CD4-positive, alpha-beta T cell (primary cell): ENCODE measurements at regions of chr1 and their contacts with region 1.

Region 1: DNA sequence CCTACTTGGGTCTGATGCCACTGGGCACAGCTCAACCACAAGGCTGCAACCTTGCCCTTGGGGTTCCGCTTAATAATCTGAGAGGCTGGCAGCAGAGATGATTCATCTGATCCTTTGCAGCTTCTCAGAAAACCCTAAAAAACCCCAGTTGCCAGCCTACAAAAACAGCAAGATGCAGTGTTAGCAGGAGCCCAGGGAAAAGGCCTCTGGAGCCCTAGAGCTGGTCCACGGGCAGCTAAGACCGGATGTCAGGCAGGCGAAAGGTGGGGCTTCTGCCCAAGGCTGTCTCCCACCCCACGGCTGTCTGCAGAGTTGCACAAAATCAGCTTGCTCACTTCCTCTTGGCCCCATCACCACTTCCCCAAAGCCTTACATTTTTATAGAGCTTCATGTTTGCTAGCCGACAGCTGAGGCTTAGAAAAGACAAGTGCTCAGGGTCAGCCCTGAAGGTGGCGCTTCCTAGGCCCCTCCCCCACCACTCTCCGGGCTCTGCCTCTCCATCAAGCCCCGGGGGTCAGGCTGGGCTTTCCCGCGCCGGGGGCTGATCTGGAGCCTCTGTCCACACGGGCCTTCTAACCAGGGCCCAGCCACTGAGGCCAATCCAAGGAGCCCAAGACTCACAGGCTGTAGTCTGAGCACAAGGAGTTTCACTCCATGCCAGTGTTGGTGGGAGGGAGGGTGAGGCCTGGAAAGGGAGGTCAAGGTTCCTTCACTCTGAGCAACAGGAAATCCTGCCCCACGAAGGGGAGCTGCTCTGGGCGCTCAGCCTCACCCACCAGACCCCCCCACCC is 4.2 kb upstream of the ADORA3 start:
- DNase-seq: peak in 13 of 14 experiments; percentile 43 to 83 (median 54)
- ATAC-seq: peak; percentile 49
- H3K4me3 ChIP-seq: peak overlapping the region; percentile 46
- H3K4me3 Mint-ChIP-seq: peak overlapping the region; percentile 84
- H3K27ac ChIP-seq: peak overlapping the region; percentile 83 to 90
- H3K27ac Mint-ChIP-seq: no peak overlapping the region
- H3K4me1 ChIP-seq: peaks cover 97% of the 10 kb centered on the region
- H3K4me1 Mint-ChIP-seq: peaks cover 55% of the 10 kb centered on the region
- H3K27me3 ChIP-seq: no peaks in the 10 kb centered on the region
- H3K27me3 Mint-ChIP-seq: no peaks in the 10 kb centered on the region
- CTCF ChIP-seq: no peak

Region 2: GRCh38 chr1:109570417-109570827 is 1937.2 kb before region 1 on chr1:
- CTCF ChIA-PET with region 1: no interaction called
- POLR2A ChIA-PET with region 1: no interaction called
- intact Hi-C with region 1: no loop called
- DNase-seq: no peak
- ATAC-seq: no peak
- H3K4me3 ChIP-seq: no peak overlapping the region
- H3K4me3 Mint-ChIP-seq: no peak overlapping the region
- H3K27ac ChIP-seq: no peak overlapping the region
- H3K27ac Mint-ChIP-seq: no peak overlapping the region
- H3K4me1 ChIP-seq: peaks cover 12% of the 10 kb centered on the region
- H3K4me1 Mint-ChIP-seq: peaks cover 26% of the 10 kb centered on the region
- H3K27me3 ChIP-seq: no peaks in the 10 kb centered on the region
- H3K27me3 Mint-ChIP-seq: no peaks in the 10 kb centered on the region
- CTCF ChIP-seq: no peak

Region 3: GRCh38 chr1:111448918-111449702 is 58.5 kb before region 1 on chr1 and contains the starts of genes ATP5PB and WDR77:
- CTCF ChIA-PET with region 1: interaction called, 4 read pairs
- POLR2A ChIA-PET with region 1: interaction called, 13 read pairs
- intact Hi-C with region 1: no loop called
- DNase-seq: peak; percentile 73 to 99 (median 84)
- ATAC-seq: peak; percentile 95
- H3K4me3 ChIP-seq: peak within 1 kb of the TSS; percentile 75
- H3K4me3 Mint-ChIP-seq: peak within 1 kb of the TSS; percentile 97
- H3K27ac ChIP-seq: peak within 1 kb of the TSS; percentile 75 to 93
- H3K27ac Mint-ChIP-seq: peak within 1 kb of the TSS; percentile 97
- H3K4me1 ChIP-seq: peaks cover 44% of the 10 kb centered on the region
- H3K4me1 Mint-ChIP-seq: peaks cover 92% of the 10 kb centered on the region
- H3K27me3 ChIP-seq: no peaks in the 10 kb centered on the region
- H3K27me3 Mint-ChIP-seq: no peaks in the 10 kb centered on the region
- CTCF ChIP-seq: no peak
- total RNA-seq, gene ATP5PB: 47.3 to 51.5 TPM
- total RNA-seq, gene WDR77: 12.4 to 15.1 TPM

Region 4: DNA sequence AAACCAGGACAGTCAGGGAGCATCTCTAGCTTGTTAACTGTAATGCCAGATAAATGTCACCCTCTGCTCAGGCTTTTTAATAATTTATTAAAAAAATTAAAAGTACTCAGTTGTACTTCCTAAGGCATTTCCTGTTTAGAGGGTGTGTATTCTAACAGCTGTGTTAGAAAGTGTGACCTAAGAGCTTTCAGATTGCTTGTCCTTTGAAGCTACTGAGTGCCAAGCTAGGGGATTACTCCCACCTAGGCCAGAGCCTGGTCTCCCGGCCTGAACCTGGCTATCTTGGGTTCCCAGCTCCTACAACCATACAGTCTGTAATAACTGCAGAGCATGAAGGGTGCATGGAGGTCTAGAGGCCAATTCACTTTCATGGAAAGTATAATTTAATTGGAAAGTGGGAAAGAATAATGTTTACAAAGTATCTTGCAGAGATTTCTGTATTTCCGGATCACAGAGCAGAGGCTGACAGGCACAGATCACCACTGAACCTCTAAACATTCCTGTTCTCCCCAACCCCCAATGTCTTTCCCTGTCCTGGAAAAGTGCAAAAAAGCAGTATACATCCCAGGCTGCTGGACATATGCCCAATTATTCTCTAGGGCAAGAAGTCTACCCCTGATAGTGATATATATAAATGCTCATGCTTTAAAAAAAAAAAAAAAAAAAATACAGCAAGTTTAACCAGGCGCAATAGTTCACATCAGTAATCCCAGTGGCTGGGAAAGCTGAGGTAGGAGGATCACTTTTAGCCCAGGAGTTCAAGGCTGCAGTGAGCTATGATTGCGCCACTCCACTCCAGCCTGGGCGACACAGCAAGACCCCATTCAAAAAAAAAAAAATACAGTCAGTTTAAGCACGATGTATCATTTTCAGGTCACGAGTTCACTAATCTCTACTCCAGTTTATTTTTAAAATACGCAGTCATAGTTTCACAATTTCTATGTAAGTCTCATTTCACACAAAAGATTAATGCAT is 75.3 kb after region 1 on chr1:
- CTCF ChIA-PET with region 1: interaction called, 10 read pairs
- POLR2A ChIA-PET with region 1: interaction called, 4 read pairs
- intact Hi-C with region 1: no loop called
- DNase-seq: peak in 1 of 14 experiments; percentile 52
- ATAC-seq: no peak
- H3K4me3 ChIP-seq: no peak overlapping the region
- H3K4me3 Mint-ChIP-seq: no peak overlapping the region
- H3K27ac ChIP-seq: no peak overlapping the region
- H3K27ac Mint-ChIP-seq: no peak overlapping the region
- H3K4me1 ChIP-seq: peaks cover 4% of the 10 kb centered on the region
- H3K4me1 Mint-ChIP-seq: peaks cover 5% of the 10 kb centered on the region
- H3K27me3 ChIP-seq: no peaks in the 10 kb centered on the region
- H3K27me3 Mint-ChIP-seq: no peaks in the 10 kb centered on the region
- CTCF ChIP-seq: no peak

Region 5: GRCh38 chr1:111619635-111620440 is 112.2 kb after region 1 on chr1 and contains the start of gene RAP1A:
- CTCF ChIA-PET with region 1: interaction called, 28 read pairs
- POLR2A ChIA-PET with region 1: interaction called, 24 read pairs
- intact Hi-C with region 1: no loop called
- DNase-seq: peak; percentile 88 to 98 (median 95)
- ATAC-seq: peak; percentile 75
- H3K4me3 ChIP-seq: peak within 1 kb of the TSS; percentile 81
- H3K4me3 Mint-ChIP-seq: peak within 1 kb of the TSS; percentile 98
- H3K27ac ChIP-seq: peak within 1 kb of the TSS; percentile 76 to 90
- H3K27ac Mint-ChIP-seq: peak within 1 kb of the TSS; percentile 95
- H3K4me1 ChIP-seq: peaks cover 60% of the 10 kb centered on the region
- H3K4me1 Mint-ChIP-seq: peaks cover 82% of the 10 kb centered on the region
- H3K27me3 ChIP-seq: no peaks in the 10 kb centered on the region
- H3K27me3 Mint-ChIP-seq: no peaks in the 10 kb centered on the region
- CTCF ChIP-seq: no peak
- total RNA-seq, gene RAP1A: 63.8 to 67.1 TPM

Region 6: DNA sequence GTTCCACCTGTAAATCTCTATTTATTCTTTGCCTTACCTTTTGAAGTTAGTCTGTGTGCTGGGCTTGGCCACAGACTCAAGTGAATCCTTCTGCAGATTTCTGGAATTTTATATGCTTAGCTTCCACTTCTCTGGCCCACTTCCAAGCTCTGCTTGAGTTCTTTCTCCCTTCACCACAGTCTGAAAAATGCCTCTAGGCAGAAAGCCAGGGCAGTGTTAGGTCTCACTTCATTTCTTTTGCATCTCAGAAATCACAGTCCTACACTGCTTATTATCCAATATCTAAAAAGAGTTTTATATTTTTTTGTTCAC is 182.7 kb after region 1 on chr1:
- CTCF ChIA-PET with region 1: interaction called, 10 read pairs
- POLR2A ChIA-PET with region 1: interaction called, 5 read pairs
- intact Hi-C with region 1: no loop called
- DNase-seq: no peak
- ATAC-seq: no peak
- H3K4me3 ChIP-seq: no peak overlapping the region
- H3K4me3 Mint-ChIP-seq: peak overlapping the region; percentile 48
- H3K27ac ChIP-seq: no peak overlapping the region
- H3K27ac Mint-ChIP-seq: peak overlapping the region; percentile 47
- H3K4me1 ChIP-seq: peaks cover 3% of the 10 kb centered on the region
- H3K4me1 Mint-ChIP-seq: peaks cover 83% of the 10 kb centered on the region
- H3K27me3 ChIP-seq: no peaks in the 10 kb centered on the region
- H3K27me3 Mint-ChIP-seq: no peaks in the 10 kb centered on the region
- CTCF ChIP-seq: no peak

Region 7: GRCh38 chr1:111720274-111720976 is 212.8 kb after region 1 on chr1:
- CTCF ChIA-PET with region 1: interaction called, 27 read pairs
- POLR2A ChIA-PET with region 1: interaction called, 10 read pairs
- intact Hi-C with region 1: loop called in 1 of 2 experiments (anchors 2 kb)
- DNase-seq: no peak
- ATAC-seq: no peak
- H3K4me3 ChIP-seq: no peak overlapping the region
- H3K4me3 Mint-ChIP-seq: no peak overlapping the region
- H3K27ac ChIP-seq: no peak overlapping the region
- H3K27ac Mint-ChIP-seq: peak overlapping the region; percentile 65
- H3K4me1 ChIP-seq: peaks cover 21% of the 10 kb centered on the region
- H3K4me1 Mint-ChIP-seq: peaks cover 36% of the 10 kb centered on the region
- H3K27me3 ChIP-seq: no peaks in the 10 kb centered on the region
- H3K27me3 Mint-ChIP-seq: no peaks in the 10 kb centered on the region
- CTCF ChIP-seq: no peak

Region 8: DNA sequence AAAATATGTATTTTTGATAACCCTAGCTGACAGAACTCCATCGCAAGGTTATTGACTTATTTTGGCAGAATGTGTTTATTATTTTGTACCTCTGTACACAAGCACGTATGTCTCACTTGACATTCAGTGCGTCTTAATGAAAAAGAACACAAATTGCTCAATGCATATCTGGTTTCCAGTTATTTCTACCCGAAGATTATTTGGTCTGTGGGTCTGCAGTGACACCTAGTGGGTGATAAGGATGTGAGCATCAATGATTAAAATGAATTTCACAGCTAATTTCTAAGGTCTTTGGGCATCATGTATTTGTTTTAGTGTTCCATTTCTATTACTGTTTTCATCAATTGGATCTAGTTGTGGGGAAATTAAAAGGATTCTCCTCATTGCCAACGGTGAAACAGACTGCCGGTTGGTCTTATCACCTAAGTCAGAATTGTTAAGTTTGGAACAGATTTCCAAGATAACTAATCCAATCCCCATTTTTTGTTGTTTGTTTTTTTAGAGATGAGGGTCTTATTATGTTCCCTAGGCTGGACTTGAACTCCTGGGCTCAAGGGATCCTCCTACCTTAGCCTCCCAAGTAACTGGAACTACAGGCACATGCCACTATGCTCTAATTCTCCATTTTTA is 262.0 kb after region 1 on chr1:
- CTCF ChIA-PET with region 1: interaction called, 11 read pairs
- POLR2A ChIA-PET with region 1: interaction called, 6 read pairs
- intact Hi-C with region 1: loop called in 1 of 2 experiments (anchors 2 kb)
- DNase-seq: peak in 12 of 14 experiments; percentile 11 to 84 (median 42)
- ATAC-seq: peak; percentile 68
- H3K4me3 ChIP-seq: no peak overlapping the region
- H3K4me3 Mint-ChIP-seq: no peak overlapping the region
- H3K27ac ChIP-seq: no peak overlapping the region
- H3K27ac Mint-ChIP-seq: peak overlapping the region; percentile 40
- H3K4me1 ChIP-seq: no peaks in the 10 kb centered on the region
- H3K4me1 Mint-ChIP-seq: peaks cover 9% of the 10 kb centered on the region
- H3K27me3 ChIP-seq: no peaks in the 10 kb centered on the region
- H3K27me3 Mint-ChIP-seq: no peaks in the 10 kb centered on the region
- CTCF ChIP-seq: peak; percentile 82